ENCODE measurements at regions of chr17 and their contacts with region 1.

Region 1: DNA sequence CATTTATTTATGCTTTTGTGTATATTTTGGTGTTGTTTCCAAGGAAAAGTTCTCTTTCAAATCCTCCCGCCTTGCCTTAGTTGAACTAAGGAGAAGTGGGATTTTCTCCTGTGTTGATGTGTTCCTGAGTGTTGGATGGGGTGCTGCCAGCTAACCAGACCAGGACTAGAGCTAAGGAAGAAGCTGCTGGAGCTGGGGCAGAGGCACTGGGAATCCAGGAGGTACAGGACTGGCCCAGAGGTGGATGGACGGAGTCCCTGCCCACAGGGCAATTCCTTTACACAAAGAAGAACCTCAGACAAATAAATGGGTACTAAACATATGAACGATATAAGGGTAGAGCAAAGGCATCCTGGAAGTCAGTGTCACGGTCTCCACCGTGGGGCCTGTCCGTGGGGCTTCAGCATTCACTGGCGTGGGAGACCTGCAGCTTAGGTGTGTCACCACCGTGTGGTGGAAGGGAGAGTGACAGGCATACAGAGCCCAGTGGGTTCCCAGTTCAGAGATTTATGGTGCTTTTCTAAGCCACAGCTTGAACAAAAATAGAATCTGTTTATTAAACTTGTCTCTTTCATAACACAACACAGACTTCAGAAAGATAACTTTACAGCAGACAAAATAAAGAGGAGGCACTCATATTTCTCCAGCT is 270.7 kb downstream of the NTN1 start:
- DNase-seq: peak; percentile 38 to 56 (median 51)
- H3K4me3 ChIP-seq: no peak overlapping the region
- H3K27ac ChIP-seq: no peak overlapping the region
- H3K4me1 ChIP-seq: peaks cover 0 to 31% (median 16%) of the 10 kb centered on the region in 4 experiments
- H3K27me3 ChIP-seq: no peaks in the 10 kb centered on the region

Region 2: DNA sequence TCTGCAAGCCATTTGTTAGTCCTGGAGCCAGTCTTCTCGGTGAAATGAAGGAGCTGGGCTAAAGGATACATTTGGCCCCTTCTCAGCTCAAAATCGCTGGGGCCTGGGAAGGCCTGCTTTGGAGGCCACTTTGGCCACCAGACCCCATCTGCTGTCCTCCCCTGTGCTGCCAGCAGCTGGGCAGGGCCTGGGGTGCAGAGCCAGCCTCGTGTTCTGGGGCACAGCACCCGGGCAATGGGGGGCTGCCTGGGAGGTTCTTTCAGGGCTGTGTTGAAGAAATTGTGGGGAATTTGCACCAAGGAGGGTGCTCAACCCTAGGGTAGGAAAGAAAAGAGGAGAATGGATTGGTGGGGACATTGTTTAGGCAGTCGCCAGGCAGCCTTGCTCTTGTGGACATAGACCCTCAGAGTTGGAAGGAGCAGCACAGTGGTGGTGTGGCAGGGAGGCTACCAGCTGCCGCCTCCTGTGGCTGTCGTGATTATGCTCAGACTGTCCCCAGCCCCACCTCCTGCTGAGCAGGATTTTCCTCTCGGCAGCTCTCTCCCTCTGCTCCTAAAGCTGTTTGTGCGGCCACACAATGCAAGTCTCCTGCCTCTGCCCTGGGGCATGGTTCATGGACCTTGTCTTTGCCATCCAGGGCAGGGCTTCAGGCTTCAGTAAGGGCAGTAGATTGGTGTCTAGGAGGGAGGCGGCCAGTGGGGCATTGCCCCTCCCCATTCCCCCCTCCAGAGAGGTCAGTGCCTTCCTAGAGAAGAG is 95.9 kb before region 1 on chr17:
- CTCF ChIA-PET with region 1: no interaction called
- POLR2A ChIA-PET with region 1: no interaction called
- DNase-seq: no peak
- H3K4me3 ChIP-seq: no peak overlapping the region
- H3K27ac ChIP-seq: no peak overlapping the region
- H3K4me1 ChIP-seq: peaks cover 0 to 6% (median 0%) of the 10 kb centered on the region in 4 experiments
- H3K27me3 ChIP-seq: no peaks in the 10 kb centered on the region

Region 3: GRCh38 chr17:9240659-9241369 is 51.2 kb before region 1 on chr17:
- CTCF ChIA-PET with region 1: no interaction called
- POLR2A ChIA-PET with region 1: no interaction called
- DNase-seq: peak in 1 of 3 donors; percentile 37
- H3K4me3 ChIP-seq: peak overlapping the region in 4 of 7 experiments; percentile 2 to 63 (median 51)
- H3K27ac ChIP-seq: no peak overlapping the region
- H3K4me1 ChIP-seq: peaks cover 0 to 36% (median 32%) of the 10 kb centered on the region in 4 experiments
- H3K27me3 ChIP-seq: no peaks in the 10 kb centered on the region

Region 4: GRCh38 chr17:9256751-9257629 is 35.0 kb before region 1 on chr17:
- CTCF ChIA-PET with region 1: interaction called, 10 read pairs
- POLR2A ChIA-PET with region 1: no interaction called
- DNase-seq: peak; percentile 72 to 91 (median 88)
- H3K4me3 ChIP-seq: peak overlapping the region in 2 of 7 experiments; percentile 26 to 45
- H3K27ac ChIP-seq: no peak overlapping the region
- H3K4me1 ChIP-seq: peaks cover 7 to 77% (median 54%) of the 10 kb centered on the region in 4 experiments
- H3K27me3 ChIP-seq: no peaks in the 10 kb centered on the region

Region 5: GRCh38 chr17:9274973-9275372 is 17.1 kb before region 1 on chr17:
- CTCF ChIA-PET with region 1: interaction called, 10 read pairs
- POLR2A ChIA-PET with region 1: no interaction called
- DNase-seq: no peak
- H3K4me3 ChIP-seq: no peak overlapping the region
- H3K27ac ChIP-seq: no peak overlapping the region
- H3K4me1 ChIP-seq: no peaks in the 10 kb centered on the region
- H3K27me3 ChIP-seq: no peaks in the 10 kb centered on the region

Region 6: GRCh38 chr17:9313346-9313745 is 21.3 kb after region 1 on chr17:
- CTCF ChIA-PET with region 1: no interaction called
- POLR2A ChIA-PET with region 1: no interaction called
- DNase-seq: no peak
- H3K4me3 ChIP-seq: no peak overlapping the region
- H3K27ac ChIP-seq: no peak overlapping the region
- H3K4me1 ChIP-seq: no peaks in the 10 kb centered on the region
- H3K27me3 ChIP-seq: no peaks in the 10 kb centered on the region

Measured in common myeloid progenitor, CD34-positive (primary cell).